Prostate gland (tissue), 2 donors: ENCODE measurements at regions of chr2 and their contacts with region 1.

Region 1: DNA sequence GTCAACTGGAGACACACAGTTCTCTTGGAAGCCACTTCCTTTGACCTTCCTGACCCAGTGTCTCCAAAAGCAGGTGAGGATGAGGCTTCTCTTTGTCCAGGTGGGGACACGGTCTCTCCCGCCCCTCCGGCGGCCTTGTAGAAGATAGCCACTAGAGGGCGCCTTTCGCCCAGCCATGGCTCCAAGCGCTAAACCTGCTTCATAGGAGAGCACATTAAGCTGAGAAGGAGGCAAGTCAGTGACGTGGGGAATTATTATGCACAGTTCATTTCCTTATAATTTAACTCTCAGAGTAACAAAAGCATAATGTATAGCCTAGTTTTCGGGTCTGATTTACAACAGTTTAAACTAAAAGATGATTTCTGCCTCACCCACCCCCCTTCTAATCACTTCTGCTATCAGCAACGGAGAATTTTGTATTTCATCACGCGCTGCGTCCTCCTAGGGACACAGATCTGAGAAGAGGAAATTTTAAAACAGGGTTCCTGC is 208.7 kb downstream of the ICOS start:
- DNase-seq: peak; percentile 67
- H3K4me3 ChIP-seq: peak overlapping the region; percentile 2 to 28
- H3K27ac ChIP-seq: peak overlapping the region in 1 of 2 donors; percentile 22
- H3K4me1 ChIP-seq: no peaks in the 10 kb centered on the region
- H3K27me3 ChIP-seq: no peaks in the 10 kb centered on the region
- CTCF ChIP-seq: peak; percentile 85 to 90 (median 88)
- POLR2A ChIP-seq: no peak

Region 2: DNA sequence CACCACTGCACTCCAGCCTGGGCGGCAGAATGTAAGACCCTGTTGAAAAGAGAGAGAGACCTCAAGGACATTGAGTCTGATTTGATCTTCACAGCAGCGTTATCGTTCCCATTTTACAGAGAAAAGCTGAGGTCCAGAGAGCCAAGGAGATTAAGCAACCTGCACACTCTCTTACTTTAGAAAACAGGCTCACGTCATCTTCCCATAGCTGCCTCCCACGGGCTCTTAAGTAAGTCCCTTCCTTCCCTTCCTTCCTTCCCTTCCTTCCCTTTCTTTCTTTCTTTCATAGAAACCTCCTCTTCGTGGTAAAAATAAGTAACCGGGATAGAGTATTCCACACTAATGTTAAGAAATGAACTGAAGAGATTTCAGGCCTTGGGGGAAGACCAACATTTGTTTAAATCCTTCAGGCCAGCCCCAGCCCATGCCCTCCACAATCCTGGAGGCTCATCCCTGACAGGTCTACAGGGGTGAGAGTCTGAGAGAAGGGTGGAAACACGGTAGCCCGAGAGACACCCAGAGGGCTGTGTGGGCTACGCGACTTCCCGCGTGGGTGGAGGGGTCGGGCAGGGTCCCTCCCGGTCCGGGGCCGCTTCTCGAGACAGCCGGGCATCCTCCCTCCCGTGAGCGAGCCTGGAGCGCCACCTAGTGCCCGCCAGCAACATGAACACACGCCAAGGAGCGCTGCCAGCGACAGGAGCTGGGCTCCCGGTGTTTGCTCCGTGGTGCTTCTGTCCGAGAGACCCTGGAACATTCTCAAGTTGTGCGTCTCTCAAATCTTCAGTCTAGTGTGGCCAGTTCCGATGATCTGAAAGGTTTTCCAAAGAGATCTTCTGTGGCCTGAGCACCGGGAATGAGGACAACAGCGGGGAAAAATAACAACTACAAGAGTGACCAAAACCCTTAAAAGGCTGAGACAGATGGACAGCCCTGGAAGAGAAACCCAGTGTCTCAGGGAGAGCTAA is 1780.3 kb after region 1 on chr2:
- intact Hi-C with region 1: loop called (anchors 10 kb)
- DNase-seq: peak; percentile 70
- H3K4me3 ChIP-seq: no peak overlapping the region
- H3K27ac ChIP-seq: peak overlapping the region in 1 of 2 donors; percentile 42
- H3K4me1 ChIP-seq: no peaks in the 10 kb centered on the region
- H3K27me3 ChIP-seq: no peaks in the 10 kb centered on the region
- CTCF ChIP-seq: peak; percentile 81 to 93 (median 92)
- POLR2A ChIP-seq: no peak